ENCODE measurements at regions of chr12 and their contacts with region 1.

Region 1: DNA sequence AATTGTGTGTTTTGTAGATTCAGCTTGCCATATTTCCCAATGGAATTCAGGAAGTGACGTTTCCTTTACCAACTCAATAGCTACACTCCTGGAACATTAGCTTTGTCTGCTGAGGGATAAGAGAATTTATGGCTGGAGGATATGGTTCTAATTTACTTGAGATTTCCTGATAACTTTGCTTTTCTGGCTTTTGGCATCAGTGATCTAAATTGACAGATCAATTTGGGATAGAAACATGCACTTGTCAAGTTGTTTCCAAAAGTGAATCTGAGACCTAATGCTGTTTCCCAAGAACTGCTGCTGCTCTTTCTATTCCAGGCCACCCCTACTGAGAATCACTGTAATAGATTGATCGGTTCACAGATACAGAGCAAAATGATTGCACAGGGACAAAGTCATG is 43.2 kb downstream of the MGAT4C start:
- DNase-seq: no peak
- H3K4me3 Mint-ChIP-seq: no peak overlapping the region
- H3K27ac Mint-ChIP-seq: no peak overlapping the region
- H3K4me1 Mint-ChIP-seq: no peaks in the 10 kb centered on the region
- H3K27me3 Mint-ChIP-seq: no peaks in the 10 kb centered on the region
- CTCF ChIP-seq: no peak

Region 2: GRCh38 chr12:86018361-86018760 is 194.7 kb before region 1 on chr12:
- CTCF ChIA-PET with region 1: no interaction called
- intact Hi-C with region 1: no loop called
- DNase-seq: no peak
- H3K4me3 Mint-ChIP-seq: no peak overlapping the region
- H3K27ac Mint-ChIP-seq: no peak overlapping the region
- H3K4me1 Mint-ChIP-seq: no peaks in the 10 kb centered on the region
- H3K27me3 Mint-ChIP-seq: no peaks in the 10 kb centered on the region
- CTCF ChIP-seq: no peak

Region 3: GRCh38 chr12:86170051-86170450 is 43.0 kb before region 1 on chr12:
- CTCF ChIA-PET with region 1: no interaction called
- intact Hi-C with region 1: loop called (anchors 2 kb)
- DNase-seq: no peak
- H3K4me3 Mint-ChIP-seq: no peak overlapping the region
- H3K27ac Mint-ChIP-seq: no peak overlapping the region
- H3K4me1 Mint-ChIP-seq: no peaks in the 10 kb centered on the region
- H3K27me3 Mint-ChIP-seq: no peaks in the 10 kb centered on the region
- CTCF ChIP-seq: no peak

Measured in Calu3 (cell line).